OCI-LY7 (cell line): ENCODE measurements at regions of chr7 and their contacts with region 1.

Region 1: GRCh38 chr7:139570119-139570518 is 46.6 kb downstream of the CLEC2L start:
- DNase-seq: no peak
- H3K4me3 ChIP-seq: no peak overlapping the region
- H3K27ac ChIP-seq: no peak overlapping the region
- H3K4me1 ChIP-seq: no peaks in the 10 kb centered on the region
- CTCF ChIP-seq: no peak

Region 2: GRCh38 chr7:140121326-140121725 is 551.2 kb after region 1 on chr7:
- CTCF ChIA-PET with region 1: interaction called, 11 read pairs
- POLR2A ChIA-PET with region 1: no interaction called
- intact Hi-C with region 1: no loop called
- DNase-seq: no peak
- H3K4me3 ChIP-seq: no peak overlapping the region
- H3K27ac ChIP-seq: no peak overlapping the region
- H3K4me1 ChIP-seq: no peaks in the 10 kb centered on the region
- CTCF ChIP-seq: no peak